ENCODE measurements at regions of chr12 and their contacts with region 1.

Region 1: GRCh38 chr12:50271280-50272247 is 11.8 kb downstream of the LIMA1 start:
- DNase-seq: no peak
- H3K4me3 ChIP-seq: no peak overlapping the region
- H3K27ac ChIP-seq: no peak overlapping the region
- H3K4me1 ChIP-seq: no peaks in the 10 kb centered on the region; a peak in 2 of 7 replicates
- H3K27me3 ChIP-seq: no peaks in the 10 kb centered on the region
- CTCF ChIP-seq: no peak
- EP300 ChIP-seq: no peak
- POLR2A ChIP-seq: no peak
- RAD21 ChIP-seq: no peak

Region 2: GRCh38 chr12:50283229-50283923 is 11.8 kb after region 1 on chr12 and contains the start of gene LIMA1:
- CTCF ChIA-PET with region 1: interaction called, 3 read pairs
- POLR2A ChIA-PET with region 1: interaction called, 10 read pairs
- DNase-seq: peak; percentile 73 to 96
- H3K4me3 ChIP-seq: peak within 1 kb of the TSS; percentile 50 to 80 (median 76)
- H3K27ac ChIP-seq: peak within 1 kb of the TSS; percentile 46; the same call in 1 of the 2 replicates
- H3K4me1 ChIP-seq: peaks cover 2 to 9% (median 6%) of the 10 kb centered on the region in 4 experiments; a peak in 5 of 7 replicates
- H3K27me3 ChIP-seq: no peaks in the 10 kb centered on the region
- CTCF ChIP-seq: peak; percentile 29 to 58 (median 39); a peak in 3 of 4 replicates
- EP300 ChIP-seq: no peak
- POLR2A ChIP-seq: peak; percentile 87 to 94
- RAD21 ChIP-seq: peak; percentile 26 to 43; a peak in 3 of 4 replicates
- total RNA-seq, gene LIMA1: 43.3 and 47.6 TPM in 2 replicates